Body of pancreas (tissue), 4 donors: ENCODE measurements at regions of chr1 and their contacts with region 1.

Region 1: GRCh38 chr1:199954699-199955098 is 72.8 kb upstream of the NR5A2 start:
- DNase-seq: peak; percentile 67 to 74 (median 69)
- ATAC-seq: peak; percentile 78
- H3K4me3 ChIP-seq: no peak overlapping the region
- H3K27ac ChIP-seq: peak overlapping the region in 3 of 4 donors; percentile 44 to 75 (median 54)
- H3K4me1 ChIP-seq: peaks cover 31% of the 10 kb centered on the region
- H3K27me3 ChIP-seq: no peaks in the 10 kb centered on the region
- CTCF ChIP-seq: peak; percentile 40 to 70 (median 67)
- POLR2A ChIP-seq: no peak

Region 2: DNA sequence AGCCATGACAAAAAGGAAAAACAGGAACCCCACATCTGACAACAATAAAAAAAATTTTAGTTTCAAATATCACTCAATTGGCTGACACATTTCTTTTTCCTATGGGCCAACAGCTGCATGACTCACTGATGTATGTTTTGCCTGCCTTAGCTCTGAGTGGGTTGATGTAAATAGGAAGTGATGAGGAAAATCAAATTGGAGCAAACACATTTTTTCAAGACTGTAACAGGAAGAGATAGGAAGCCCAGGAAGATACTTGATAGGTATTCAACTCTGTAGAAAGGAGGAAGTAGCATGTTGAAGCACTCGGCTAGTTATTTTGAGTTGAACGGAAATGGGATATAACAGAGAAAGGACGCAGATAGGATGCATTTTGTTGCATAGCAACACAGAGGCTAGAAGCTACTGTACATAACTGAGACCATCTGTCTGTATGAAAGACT is 95.2 kb before region 1 on chr1:
- intact Hi-C with region 1: no loop called
- DNase-seq: peak in 1 of 4 donors; percentile 44
- ATAC-seq: no peak
- H3K4me3 ChIP-seq: no peak overlapping the region
- H3K27ac ChIP-seq: no peak overlapping the region
- H3K4me1 ChIP-seq: no peaks in the 10 kb centered on the region
- H3K27me3 ChIP-seq: no peaks in the 10 kb centered on the region
- CTCF ChIP-seq: no peak
- POLR2A ChIP-seq: no peak

Region 3: DNA sequence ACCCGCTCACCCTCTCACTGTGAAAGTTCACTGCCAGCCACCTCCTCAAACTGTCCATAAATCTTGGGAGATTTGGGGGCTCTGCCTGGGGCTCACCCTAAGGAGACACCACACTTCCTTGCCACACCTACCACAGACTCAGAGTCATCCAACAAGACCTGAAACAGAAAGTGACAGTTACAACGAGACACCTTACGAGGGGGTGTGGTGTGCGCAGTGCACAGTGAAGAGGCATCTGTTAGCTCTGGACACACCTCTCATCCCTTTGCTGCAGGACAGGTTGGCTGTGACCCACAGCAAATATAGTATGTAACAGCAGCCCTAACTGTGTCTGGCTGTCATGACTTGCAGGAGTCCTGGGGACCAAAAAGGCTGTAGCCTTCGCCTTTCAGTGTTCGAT is 263.0 kb after region 1 on chr1:
- intact Hi-C with region 1: no loop called
- DNase-seq: no peak
- ATAC-seq: no peak
- H3K4me3 ChIP-seq: no peak overlapping the region
- H3K27ac ChIP-seq: no peak overlapping the region
- H3K4me1 ChIP-seq: no peaks in the 10 kb centered on the region
- H3K27me3 ChIP-seq: no peaks in the 10 kb centered on the region
- CTCF ChIP-seq: no peak
- POLR2A ChIP-seq: no peak

Region 4: GRCh38 chr1:200510228-200510623 is 555.5 kb after region 1 on chr1:
- intact Hi-C with region 1: loop called (anchors 10 kb)
- DNase-seq: peak; percentile 79 to 86 (median 84)
- ATAC-seq: peak; percentile 93
- H3K4me3 ChIP-seq: no peak overlapping the region
- H3K27ac ChIP-seq: no peak overlapping the region
- H3K4me1 ChIP-seq: no peaks in the 10 kb centered on the region
- H3K27me3 ChIP-seq: no peaks in the 10 kb centered on the region
- CTCF ChIP-seq: peak; percentile 49 to 95 (median 87)
- POLR2A ChIP-seq: no peak